ENCODE measurements at regions of chr2 and their contacts with region 1.

Region 1: DNA sequence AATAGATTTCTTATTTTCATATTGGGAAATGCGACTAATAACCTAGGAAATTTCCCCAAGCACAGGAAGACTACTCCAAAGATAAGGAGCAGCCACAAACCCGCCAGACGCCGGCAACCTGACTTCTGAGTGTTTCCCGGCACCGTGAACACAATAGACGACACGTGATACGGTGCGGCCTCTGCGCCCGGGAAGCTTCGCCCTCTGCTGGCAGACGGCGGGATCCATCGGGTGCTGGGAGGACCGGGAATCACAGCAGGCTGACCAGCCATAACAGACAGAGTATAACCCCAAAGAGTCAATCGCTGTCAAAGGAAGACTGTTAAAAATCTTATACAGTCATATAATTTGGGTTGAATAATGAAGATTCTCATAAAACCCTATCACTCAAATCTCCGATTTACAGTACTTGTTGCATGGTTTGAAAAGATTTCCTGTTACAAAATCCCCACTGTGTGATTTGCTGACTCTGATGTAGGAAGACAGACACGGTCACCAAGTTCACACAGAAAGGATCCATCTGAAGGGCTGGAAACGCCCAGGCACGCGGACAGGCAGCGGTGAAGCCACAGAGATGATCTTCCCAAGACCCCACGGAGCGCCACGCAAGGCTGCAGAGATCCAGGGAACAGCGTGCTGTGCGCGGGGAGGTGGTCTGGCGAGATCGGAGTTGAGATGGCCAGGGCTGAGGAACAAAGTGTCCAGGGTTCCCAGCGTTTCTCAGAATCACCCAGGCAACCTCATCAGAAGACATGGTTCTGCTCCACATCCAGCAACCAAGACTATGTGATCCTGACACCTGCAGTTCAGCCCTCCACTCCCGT is 73.8 kb downstream of the EIPR1 start:
- DNase-seq: peak; percentile 68
- ATAC-seq: peak; percentile 95
- H3K4me3 Mint-ChIP-seq: peak overlapping the region; percentile 45
- H3K27ac Mint-ChIP-seq: peak overlapping the region; percentile 7
- H3K4me1 Mint-ChIP-seq: peaks cover 16% of the 10 kb centered on the region
- H3K27me3 Mint-ChIP-seq: no peaks in the 10 kb centered on the region
- CTCF ChIP-seq: no peak

Region 2: GRCh38 chr2:2121887-2122286 is 1181.9 kb before region 1 on chr2:
- CTCF ChIA-PET with region 1: no interaction called
- POLR2A ChIA-PET with region 1: no interaction called
- intact Hi-C with region 1: loop called (anchors 5 kb)
- DNase-seq: no peak
- ATAC-seq: no peak
- H3K4me3 Mint-ChIP-seq: no peak overlapping the region
- H3K27ac Mint-ChIP-seq: no peak overlapping the region
- H3K4me1 Mint-ChIP-seq: peaks cover 4% of the 10 kb centered on the region
- H3K27me3 Mint-ChIP-seq: no peaks in the 10 kb centered on the region
- CTCF ChIP-seq: no peak

Region 3: DNA sequence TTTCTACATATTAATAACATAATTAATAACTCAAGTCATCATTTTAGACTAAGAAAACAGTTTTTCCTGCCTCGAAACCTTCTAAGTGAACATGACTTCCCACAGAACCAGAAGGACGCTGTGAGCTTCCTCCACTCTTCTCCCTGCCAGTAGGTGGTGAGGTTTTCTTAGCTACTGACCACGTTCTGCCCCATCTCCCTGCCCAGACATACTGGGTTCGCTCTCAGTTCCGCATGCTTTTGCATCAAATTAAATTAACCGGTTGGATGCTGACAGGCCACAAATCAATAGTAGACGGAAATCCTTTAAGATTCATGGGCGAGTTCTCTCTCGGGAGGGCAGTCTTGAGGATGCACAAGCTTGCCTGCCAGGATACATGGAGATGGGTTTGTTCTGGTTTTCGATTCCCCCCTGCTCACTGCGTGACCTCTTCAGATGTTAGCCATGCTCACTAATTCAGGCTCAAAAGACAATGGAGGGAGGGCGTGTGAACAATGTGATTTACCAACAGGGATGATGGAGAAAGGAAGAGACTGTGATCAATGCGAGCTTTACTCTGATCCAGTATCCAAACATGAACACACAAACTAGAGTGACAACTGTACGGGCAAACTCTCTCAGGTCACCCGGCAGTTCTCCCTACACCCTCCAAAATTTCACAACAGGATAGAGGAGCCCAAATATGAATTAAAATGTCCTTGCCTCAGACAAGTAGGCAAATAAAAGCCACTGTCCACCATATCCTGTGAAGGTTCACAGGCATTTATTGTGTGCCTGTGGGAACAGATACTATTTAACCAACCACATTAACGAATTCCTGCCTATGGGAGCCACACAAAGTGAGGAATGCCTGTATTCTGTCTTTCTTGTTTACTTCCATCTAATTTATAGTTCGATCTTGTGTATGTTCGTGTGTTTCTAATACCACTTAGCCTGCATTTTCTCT is 301.9 kb before region 1 on chr2:
- CTCF ChIA-PET with region 1: no interaction called
- POLR2A ChIA-PET with region 1: no interaction called
- intact Hi-C with region 1: loop called (anchors 1 kb)
- DNase-seq: no peak
- ATAC-seq: no peak
- H3K4me3 Mint-ChIP-seq: no peak overlapping the region
- H3K27ac Mint-ChIP-seq: no peak overlapping the region
- H3K4me1 Mint-ChIP-seq: no peaks in the 10 kb centered on the region
- H3K27me3 Mint-ChIP-seq: peaks cover 8% of the 10 kb centered on the region
- CTCF ChIP-seq: no peak

Region 4: DNA sequence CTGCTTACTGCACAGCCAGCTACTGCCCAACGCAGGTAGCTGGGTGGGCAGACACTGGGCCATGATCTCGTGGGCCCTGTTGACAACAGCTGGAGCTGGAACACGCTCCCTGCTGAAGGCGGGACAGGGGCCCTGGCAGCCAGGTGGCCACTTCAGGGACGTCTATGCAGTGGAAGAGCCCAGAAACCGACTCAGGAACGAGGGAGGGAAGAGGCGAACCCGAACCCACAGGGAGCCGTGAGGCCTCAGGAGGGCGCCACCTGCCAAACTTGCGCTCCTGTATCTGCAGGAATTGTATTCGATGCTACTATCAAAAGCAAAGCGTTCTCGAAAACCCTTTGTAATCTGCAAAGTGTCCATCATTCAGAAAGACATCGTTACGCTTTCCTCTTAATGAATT is 124.6 kb before region 1 on chr2:
- CTCF ChIA-PET with region 1: no interaction called
- POLR2A ChIA-PET with region 1: no interaction called
- intact Hi-C with region 1: loop called (anchors 5 kb)
- DNase-seq: no peak
- ATAC-seq: no peak
- H3K4me3 Mint-ChIP-seq: no peak overlapping the region
- H3K27ac Mint-ChIP-seq: no peak overlapping the region
- H3K4me1 Mint-ChIP-seq: no peaks in the 10 kb centered on the region
- H3K27me3 Mint-ChIP-seq: no peaks in the 10 kb centered on the region
- CTCF ChIP-seq: no peak

Region 5: DNA sequence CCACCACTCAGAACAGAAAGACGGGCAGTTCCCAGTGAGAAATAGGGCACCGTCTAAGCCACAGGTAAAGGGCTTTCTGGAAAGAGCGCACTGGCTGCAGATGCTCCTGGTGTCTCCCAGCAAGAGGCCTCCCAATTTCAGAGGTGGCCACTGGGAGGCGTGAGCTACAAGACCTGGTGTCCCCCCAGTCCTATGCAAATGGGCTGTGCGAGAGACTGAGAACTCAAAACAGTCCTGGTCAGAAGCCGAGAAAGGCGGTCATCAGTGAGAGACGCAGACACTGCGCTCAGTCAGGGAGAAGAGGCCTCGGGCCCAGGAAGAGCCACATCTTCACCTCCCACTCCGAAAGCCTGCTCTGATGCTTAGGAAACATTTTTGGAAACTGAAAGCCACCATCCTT is 105.7 kb before region 1 on chr2:
- CTCF ChIA-PET with region 1: no interaction called
- POLR2A ChIA-PET with region 1: no interaction called
- intact Hi-C with region 1: loop called (anchors 1 kb)
- DNase-seq: no peak
- ATAC-seq: no peak
- H3K4me3 Mint-ChIP-seq: no peak overlapping the region
- H3K27ac Mint-ChIP-seq: no peak overlapping the region
- H3K4me1 Mint-ChIP-seq: no peaks in the 10 kb centered on the region
- H3K27me3 Mint-ChIP-seq: no peaks in the 10 kb centered on the region
- CTCF ChIP-seq: no peak

Region 6: GRCh38 chr2:3254442-3254941 is 49.3 kb before region 1 on chr2:
- CTCF ChIA-PET with region 1: no interaction called
- POLR2A ChIA-PET with region 1: no interaction called
- intact Hi-C with region 1: loop called (anchors 2 kb)
- DNase-seq: peak; percentile 41
- ATAC-seq: peak; percentile 80
- H3K4me3 Mint-ChIP-seq: peak overlapping the region; percentile 68
- H3K27ac Mint-ChIP-seq: peak overlapping the region; percentile 89
- H3K4me1 Mint-ChIP-seq: peaks cover 63% of the 10 kb centered on the region
- H3K27me3 Mint-ChIP-seq: no peaks in the 10 kb centered on the region
- CTCF ChIP-seq: no peak

Region 7: DNA sequence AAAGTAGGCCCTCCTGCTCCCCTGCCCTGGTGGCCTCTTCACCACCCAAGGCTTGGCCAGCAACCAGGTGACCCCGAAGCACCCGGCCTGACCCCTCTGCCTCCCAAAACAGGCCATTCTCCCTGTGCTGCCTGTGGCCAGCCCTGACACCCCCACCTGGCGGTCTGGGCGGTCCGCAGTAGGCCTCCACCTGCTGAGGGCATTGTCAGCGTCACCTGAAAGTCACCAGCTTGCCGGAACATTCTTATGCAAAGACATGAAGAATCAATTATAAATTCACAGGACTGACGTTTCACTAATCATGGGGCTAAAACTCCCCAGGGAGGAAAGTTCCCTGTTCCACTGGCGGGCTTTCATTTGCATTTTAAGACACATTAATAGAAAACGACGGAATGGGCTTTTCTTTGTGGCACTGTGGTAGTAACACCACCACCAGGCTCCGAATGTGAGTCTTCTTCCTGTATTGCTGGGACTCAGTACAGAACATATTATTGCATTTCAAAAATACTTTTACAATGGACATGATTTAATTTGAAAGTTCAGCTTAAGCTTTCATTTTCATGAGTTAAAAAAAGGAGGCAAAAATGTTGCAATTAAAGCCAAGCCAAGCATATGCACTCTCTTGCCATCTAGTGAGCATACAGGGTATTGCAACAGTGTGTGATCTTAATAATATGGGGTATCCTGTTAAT is 158.2 kb after region 1 on chr2:
- CTCF ChIA-PET with region 1: no interaction called
- POLR2A ChIA-PET with region 1: no interaction called
- intact Hi-C with region 1: loop called (anchors 5 kb)
- DNase-seq: no peak
- ATAC-seq: peak; percentile 80
- H3K4me3 Mint-ChIP-seq: peak overlapping the region; percentile 70
- H3K27ac Mint-ChIP-seq: peak overlapping the region; percentile 90
- H3K4me1 Mint-ChIP-seq: peaks cover 13% of the 10 kb centered on the region
- H3K27me3 Mint-ChIP-seq: no peaks in the 10 kb centered on the region
- CTCF ChIP-seq: peak; percentile 93